Adrenal gland (tissue), 19 donors: ENCODE measurements at regions of chr16 and their contacts with region 1.

Region 1: DNA sequence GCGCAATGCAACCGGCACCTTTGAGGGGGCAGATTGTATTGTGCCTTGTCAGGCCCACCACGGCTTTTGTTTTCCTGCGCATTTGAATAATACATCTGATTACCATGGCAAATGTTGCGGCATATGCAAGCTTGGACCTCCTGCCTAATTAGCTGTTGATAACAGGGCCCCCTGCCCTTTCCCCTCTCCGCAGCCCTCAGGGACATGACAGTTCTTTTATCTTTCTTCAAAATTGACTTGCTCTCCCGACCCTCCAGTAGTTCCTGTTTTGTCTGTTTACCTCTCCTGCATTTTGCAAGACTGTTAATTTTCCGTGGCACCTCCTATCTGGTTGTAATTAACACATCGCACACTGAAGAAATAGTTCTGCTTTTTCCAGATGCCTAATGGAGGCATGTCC is 86.8 kb downstream of the RBFOX1 start:
- DNase-seq: no peak
- H3K4me3 ChIP-seq: no peak overlapping the region
- H3K27ac ChIP-seq: no peak overlapping the region
- H3K4me1 ChIP-seq: no peaks in the 10 kb centered on the region
- H3K27me3 ChIP-seq: no peaks in the 10 kb centered on the region
- CTCF ChIP-seq: no peak
- POLR2A ChIP-seq: no peak

Region 2: DNA sequence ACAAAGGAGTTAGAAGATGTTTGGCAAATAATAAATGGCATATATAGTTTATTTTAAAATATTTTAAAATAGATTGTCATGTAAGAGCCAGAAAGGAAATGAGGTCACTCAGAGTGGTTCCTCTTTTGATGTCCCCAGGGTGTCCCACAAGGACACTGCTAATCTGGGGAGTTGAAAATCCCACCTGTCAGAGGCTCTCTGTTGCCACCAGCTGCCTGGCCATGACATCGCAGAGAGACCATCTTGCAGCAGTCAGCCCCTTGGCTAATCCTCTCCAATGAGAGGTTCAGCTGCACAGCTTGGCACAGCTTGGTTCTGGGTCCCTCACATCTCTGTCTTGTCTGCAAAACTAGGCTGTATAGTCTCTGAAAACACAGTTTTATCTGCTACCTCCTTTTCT is 97.8 kb before region 1 on chr16:
- intact Hi-C with region 1: loop called in 1 of 2 experiments (anchors 10 kb)
- DNase-seq: no peak
- H3K4me3 ChIP-seq: no peak overlapping the region
- H3K27ac ChIP-seq: no peak overlapping the region
- H3K4me1 ChIP-seq: no peaks in the 10 kb centered on the region
- H3K27me3 ChIP-seq: no peaks in the 10 kb centered on the region
- CTCF ChIP-seq: no peak
- POLR2A ChIP-seq: no peak

Region 3: DNA sequence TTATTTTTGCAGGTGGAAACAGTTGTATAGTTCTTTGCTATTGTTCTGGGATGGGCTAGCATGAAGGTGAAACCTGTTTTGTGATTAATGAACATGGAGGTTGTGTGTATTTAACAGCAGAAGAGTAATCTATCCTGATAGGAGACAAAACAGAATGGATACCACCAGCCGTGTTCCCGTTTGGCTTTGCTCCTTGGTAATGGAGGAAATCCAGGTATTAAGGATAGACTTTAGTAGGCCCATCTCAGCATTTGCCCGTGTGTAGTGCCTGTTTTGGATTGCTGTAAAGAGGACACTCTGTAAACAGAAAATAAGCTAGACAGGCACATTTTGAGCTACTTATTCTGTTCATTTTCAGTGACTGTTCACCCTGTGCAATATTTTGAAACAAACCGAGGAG is 128.3 kb after region 1 on chr16:
- intact Hi-C with region 1: no loop called
- DNase-seq: no peak
- H3K4me3 ChIP-seq: no peak overlapping the region
- H3K27ac ChIP-seq: no peak overlapping the region
- H3K4me1 ChIP-seq: no peaks in the 10 kb centered on the region
- H3K27me3 ChIP-seq: no peaks in the 10 kb centered on the region
- CTCF ChIP-seq: no peak
- POLR2A ChIP-seq: no peak